WTC11 (cell line): ENCODE measurements at regions of chr15 and their contacts with region 1.

Region 1: GRCh38 chr15:35019386-35020083 is 31.4 kb upstream of the ZNF770 start:
- DNase-seq: no peak
- ATAC-seq: peak; percentile 13
- H3K4me3 Mint-ChIP-seq: peak overlapping the region; percentile 45
- H3K27ac Mint-ChIP-seq: peak overlapping the region; percentile 98
- H3K4me1 Mint-ChIP-seq: peaks cover 49% of the 10 kb centered on the region
- H3K27me3 Mint-ChIP-seq: no peaks in the 10 kb centered on the region
- CTCF ChIP-seq: no peak

Region 2: DNA sequence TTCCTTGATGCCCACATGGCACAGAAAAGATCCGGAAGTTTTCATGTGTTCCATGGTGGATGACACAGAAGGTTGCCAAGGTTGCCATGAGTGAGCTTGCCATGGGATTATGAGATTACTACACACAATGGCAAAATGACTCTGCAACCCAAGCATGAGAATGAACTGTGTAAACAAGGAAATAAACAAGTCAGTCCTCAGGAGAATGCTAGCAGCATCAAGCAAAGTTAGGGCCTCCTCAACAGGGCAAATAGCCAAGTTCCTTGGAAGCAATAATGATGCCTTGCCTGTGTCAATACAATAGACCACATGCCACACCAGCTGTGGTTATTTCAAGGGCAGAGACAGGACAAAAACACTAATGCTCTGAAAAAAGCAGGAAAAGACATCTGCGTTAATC is 91.8 kb before region 1 on chr15:
- CTCF ChIA-PET with region 1: no interaction called
- POLR2A ChIA-PET with region 1: no interaction called
- DNase-seq: no peak
- ATAC-seq: no peak
- H3K4me3 Mint-ChIP-seq: no peak overlapping the region
- H3K27ac Mint-ChIP-seq: no peak overlapping the region
- H3K4me1 Mint-ChIP-seq: no peaks in the 10 kb centered on the region
- H3K27me3 Mint-ChIP-seq: no peaks in the 10 kb centered on the region
- CTCF ChIP-seq: no peak

Region 3: GRCh38 chr15:34969340-34970097 is 50.0 kb before region 1 on chr15 and contains the start of gene AQR:
- CTCF ChIA-PET with region 1: interaction called, 22 read pairs
- POLR2A ChIA-PET with region 1: interaction called, 3 read pairs
- DNase-seq: peak; percentile 96
- ATAC-seq: peak; percentile 99
- H3K4me3 Mint-ChIP-seq: peak within 1 kb of the TSS; percentile 99
- H3K27ac Mint-ChIP-seq: peak within 1 kb of the TSS; percentile 99
- H3K4me1 Mint-ChIP-seq: peaks cover 26% of the 10 kb centered on the region
- H3K27me3 Mint-ChIP-seq: no peaks in the 10 kb centered on the region
- CTCF ChIP-seq: peak; percentile 41
- total RNA-seq, gene AQR: 55.6 to 62.1 TPM (median 57.9 TPM) in 3 replicates

Region 4: GRCh38 chr15:34987985-34988873 is 31.3 kb before region 1 on chr15 and contains the start of gene ZNF770:
- CTCF ChIA-PET with region 1: interaction called, 22 read pairs
- POLR2A ChIA-PET with region 1: no interaction called
- DNase-seq: peak; percentile 76
- ATAC-seq: peak; percentile 86
- H3K4me3 Mint-ChIP-seq: peak within 1 kb of the TSS; percentile 97
- H3K27ac Mint-ChIP-seq: peak within 1 kb of the TSS; percentile 95
- H3K4me1 Mint-ChIP-seq: peaks cover 52% of the 10 kb centered on the region
- H3K27me3 Mint-ChIP-seq: no peaks in the 10 kb centered on the region
- CTCF ChIP-seq: no peak
- total RNA-seq, gene ZNF770: 142 to 158 TPM (median 154 TPM) in 3 replicates

Region 5: GRCh38 chr15:34994925-34995324 is 24.6 kb before region 1 on chr15:
- CTCF ChIA-PET with region 1: interaction called, 20 read pairs
- POLR2A ChIA-PET with region 1: no interaction called
- DNase-seq: no peak
- ATAC-seq: peak; percentile 40
- H3K4me3 Mint-ChIP-seq: peak overlapping the region; percentile 12; the same call in 1 of the 2 replicates
- H3K27ac Mint-ChIP-seq: peak overlapping the region; percentile 92
- H3K4me1 Mint-ChIP-seq: peaks cover 46% of the 10 kb centered on the region
- H3K27me3 Mint-ChIP-seq: no peaks in the 10 kb centered on the region
- CTCF ChIP-seq: no peak

Region 6: GRCh38 chr15:35000511-35000910 is 19.0 kb before region 1 on chr15:
- CTCF ChIA-PET with region 1: interaction called, 20 read pairs
- POLR2A ChIA-PET with region 1: no interaction called
- DNase-seq: no peak
- ATAC-seq: peak; percentile 30
- H3K4me3 Mint-ChIP-seq: no peak overlapping the region
- H3K27ac Mint-ChIP-seq: peak overlapping the region; percentile 71; the same call in 1 of the 2 replicates
- H3K4me1 Mint-ChIP-seq: peaks cover 17% of the 10 kb centered on the region
- H3K27me3 Mint-ChIP-seq: no peaks in the 10 kb centered on the region
- CTCF ChIP-seq: no peak

Region 7: DNA sequence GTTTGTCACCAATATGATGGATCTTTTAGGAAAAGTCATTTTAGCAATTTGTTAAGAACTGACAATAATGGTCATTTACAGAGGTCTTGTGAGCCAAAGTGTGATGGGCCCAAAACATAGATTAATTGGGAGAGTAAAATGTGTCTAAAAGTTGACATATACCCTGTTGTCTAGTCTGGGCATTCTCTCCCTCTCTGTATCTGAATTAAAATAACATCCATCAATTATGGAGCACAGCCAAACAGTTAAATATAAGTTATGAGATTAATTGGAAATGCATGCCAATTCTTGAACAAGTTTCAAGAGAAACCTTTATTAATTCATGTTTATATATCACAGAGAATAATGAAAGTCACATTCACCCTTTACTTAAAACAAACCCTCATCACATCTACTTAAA is 79.2 kb after region 1 on chr15:
- CTCF ChIA-PET with region 1: no interaction called
- POLR2A ChIA-PET with region 1: no interaction called
- DNase-seq: no peak
- ATAC-seq: no peak
- H3K4me3 Mint-ChIP-seq: no peak overlapping the region
- H3K27ac Mint-ChIP-seq: no peak overlapping the region
- H3K4me1 Mint-ChIP-seq: peaks cover 3% of the 10 kb centered on the region
- H3K27me3 Mint-ChIP-seq: no peaks in the 10 kb centered on the region
- CTCF ChIP-seq: no peak